Activated B cell treated with CpG ODN at 0.5 μM for 24 hours (primary cell): ENCODE measurements at regions of chr2 and their contacts with region 1.

Region 1: GRCh38 chr2:221189431-221190067 is 382.6 kb downstream of the EPHA4 start:
- DNase-seq: no peak
- ATAC-seq: no peak
- H3K4me3 Mint-ChIP-seq: no peak overlapping the region
- H3K27ac Mint-ChIP-seq: no peak overlapping the region
- H3K4me1 Mint-ChIP-seq: no peaks in the 10 kb centered on the region
- H3K27me3 Mint-ChIP-seq: peaks cover 11% of the 10 kb centered on the region
- CTCF ChIP-seq: no peak

Region 2: DNA sequence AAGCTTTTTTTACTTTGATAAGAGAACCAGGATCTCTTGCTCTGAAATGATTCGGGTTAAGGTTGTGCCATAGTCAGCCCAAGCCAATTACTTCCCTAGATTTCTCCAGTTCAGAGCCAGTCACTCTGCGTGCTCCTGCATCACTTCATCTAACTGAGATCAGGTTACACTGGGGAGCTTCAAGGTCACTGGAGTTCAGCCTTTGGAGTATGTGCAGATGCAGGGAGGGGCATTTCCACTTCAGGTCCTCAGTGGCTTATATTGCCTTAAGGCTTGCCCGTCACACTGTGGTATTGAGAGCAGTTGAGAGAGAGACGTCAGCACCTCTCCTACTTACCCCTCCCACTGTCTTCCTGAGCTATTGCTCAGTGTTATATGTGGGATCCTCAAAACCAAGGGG is 64.8 kb after region 1 on chr2:
- CTCF ChIA-PET with region 1: no interaction called
- POLR2A ChIA-PET with region 1: no interaction called
- intact Hi-C with region 1: loop called (anchors 2 kb)
- DNase-seq: no peak
- ATAC-seq: no peak
- H3K4me3 Mint-ChIP-seq: no peak overlapping the region
- H3K27ac Mint-ChIP-seq: no peak overlapping the region
- H3K4me1 Mint-ChIP-seq: no peaks in the 10 kb centered on the region
- H3K27me3 Mint-ChIP-seq: no peaks in the 10 kb centered on the region
- CTCF ChIP-seq: no peak

Region 3: GRCh38 chr2:221267773-221268425 is 78.3 kb after region 1 on chr2:
- CTCF ChIA-PET with region 1: no interaction called
- POLR2A ChIA-PET with region 1: no interaction called
- intact Hi-C with region 1: no loop called
- DNase-seq: no peak
- ATAC-seq: no peak
- H3K4me3 Mint-ChIP-seq: no peak overlapping the region
- H3K27ac Mint-ChIP-seq: no peak overlapping the region
- H3K4me1 Mint-ChIP-seq: no peaks in the 10 kb centered on the region
- H3K27me3 Mint-ChIP-seq: peaks cover 7% of the 10 kb centered on the region
- CTCF ChIP-seq: no peak